ENCODE measurements at regions of chr18 and their contacts with region 1.

Region 1: DNA sequence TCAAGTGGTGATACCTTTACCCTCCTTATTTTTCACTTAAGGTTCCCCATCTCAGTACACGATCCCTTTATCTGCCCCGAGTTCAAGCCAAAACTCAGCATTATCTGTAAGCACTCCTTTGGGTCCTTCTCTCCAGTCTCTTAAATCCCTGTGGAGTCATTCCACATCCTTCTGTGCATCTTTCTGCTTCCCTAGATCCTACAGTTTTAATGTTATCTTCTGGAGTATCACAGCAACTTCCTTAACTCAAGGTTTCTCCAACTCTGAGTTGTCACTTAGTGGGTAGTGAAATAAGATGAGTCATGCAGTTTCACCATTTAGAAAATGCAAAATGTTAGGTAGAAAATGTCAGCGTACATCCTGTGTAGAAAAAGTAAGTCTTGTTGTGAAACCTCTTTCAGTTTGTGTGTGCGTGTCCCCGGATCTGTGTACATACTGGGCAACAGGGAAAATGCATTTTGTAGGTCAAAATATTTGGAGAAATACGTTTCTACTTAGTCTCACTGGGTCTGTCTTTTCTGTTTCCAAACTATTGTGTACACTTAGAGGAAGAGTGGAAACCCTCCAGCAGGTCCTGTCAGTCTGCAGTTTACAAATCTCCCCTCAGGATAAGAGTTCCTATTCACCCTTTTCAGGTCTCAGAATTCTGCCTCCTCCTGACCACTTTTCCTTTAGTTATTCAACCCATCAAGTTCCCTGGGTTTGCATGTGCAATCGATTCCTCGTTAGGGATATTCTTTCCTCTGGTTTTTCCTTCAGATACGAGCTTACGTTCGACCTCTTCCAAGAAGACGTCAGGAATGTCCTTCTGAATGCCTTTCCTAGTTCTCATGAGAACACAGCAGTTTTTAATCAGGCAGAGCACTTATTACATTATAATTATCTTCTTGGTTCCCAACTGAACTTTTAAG is 154.8 kb downstream of the TGIF1 start:
- DNase-seq: no peak
- ATAC-seq: peak; percentile 77
- H3K4me3 ChIP-seq: peak overlapping the region; percentile 34 to 53
- H3K27ac ChIP-seq: peak overlapping the region; percentile 90 to 97
- H3K4me1 ChIP-seq: peaks cover 2% of the 10 kb centered on the region in 2 donors
- H3K27me3 ChIP-seq: no peaks in the 10 kb centered on the region

Region 2: DNA sequence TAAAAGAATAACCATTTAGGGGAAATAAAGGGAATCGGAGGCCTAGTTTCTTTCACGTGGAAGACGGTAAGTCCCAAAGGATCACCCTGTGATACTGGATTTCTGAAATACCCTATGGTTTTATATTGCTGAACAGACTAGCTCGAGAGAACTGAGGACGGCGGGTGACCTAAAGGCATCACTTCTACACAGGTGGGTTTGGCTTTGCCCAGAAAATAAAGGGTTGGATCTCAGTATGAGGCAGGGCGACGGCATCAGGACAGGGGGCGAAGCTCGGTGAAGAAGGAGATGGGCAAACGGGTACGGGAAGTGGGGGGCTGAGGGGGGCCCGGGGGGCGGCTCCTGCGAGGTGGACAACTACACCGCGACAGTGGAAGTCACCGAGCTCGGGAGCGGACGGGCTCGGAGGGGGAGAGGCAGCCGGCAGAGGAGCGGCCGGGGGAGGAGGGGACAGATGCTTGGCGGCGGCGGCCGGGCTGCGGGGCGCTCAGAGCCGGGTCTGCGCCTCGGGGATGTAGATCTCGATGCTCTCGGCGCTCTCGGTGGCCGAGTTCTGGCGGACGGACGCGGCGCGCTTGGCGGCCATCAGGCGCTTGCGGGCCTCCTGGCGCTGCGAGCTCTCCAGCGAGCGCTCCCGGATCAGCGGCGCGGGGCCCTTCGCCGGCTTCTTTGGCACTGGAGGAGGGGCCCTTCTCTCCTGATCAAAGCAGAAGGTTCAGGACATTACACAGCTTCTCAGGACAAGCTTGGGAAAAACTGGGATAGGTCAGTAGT is 105.9 kb before region 1 on chr18:
- intact Hi-C with region 1: no loop called
- DNase-seq: peak; percentile 53 to 84
- ATAC-seq: peak; percentile 75
- H3K4me3 ChIP-seq: peak overlapping the region in 1 of 2 donors; percentile 32
- H3K27ac ChIP-seq: no peak overlapping the region
- H3K4me1 ChIP-seq: no peaks in the 10 kb centered on the region
- H3K27me3 ChIP-seq: no peaks in the 10 kb centered on the region

Region 3: GRCh38 chr18:3623769-3624545 is 19.2 kb after region 1 on chr18:
- intact Hi-C with region 1: loop called (anchors 1 to 2 kb)
- DNase-seq: peak; percentile 85 to 93
- ATAC-seq: peak; percentile 84
- H3K4me3 ChIP-seq: no peak overlapping the region
- H3K27ac ChIP-seq: peak overlapping the region; percentile 65 to 70
- H3K4me1 ChIP-seq: peaks cover 0 to 2% of the 10 kb centered on the region in 2 donors
- H3K27me3 ChIP-seq: no peaks in the 10 kb centered on the region

Region 4: GRCh38 chr18:4299395-4299794 is 694.6 kb after region 1 on chr18:
- intact Hi-C with region 1: no loop called
- DNase-seq: no peak
- ATAC-seq: no peak
- H3K4me3 ChIP-seq: no peak overlapping the region
- H3K27ac ChIP-seq: no peak overlapping the region
- H3K4me1 ChIP-seq: no peaks in the 10 kb centered on the region
- H3K27me3 ChIP-seq: peaks cover 0 to 1% of the 10 kb centered on the region in 2 donors